AG04449 (cell line): ENCODE measurements at regions of chr14 and their contacts with region 1.

Region 1: GRCh38 chr14:30270200-30271161 is 288.5 kb upstream of the G2E3 start:
- DNase-seq: no peak
- H3K4me3 ChIP-seq: peak overlapping the region; percentile 47
- CTCF ChIP-seq: peak; percentile 91

Region 2: DNA sequence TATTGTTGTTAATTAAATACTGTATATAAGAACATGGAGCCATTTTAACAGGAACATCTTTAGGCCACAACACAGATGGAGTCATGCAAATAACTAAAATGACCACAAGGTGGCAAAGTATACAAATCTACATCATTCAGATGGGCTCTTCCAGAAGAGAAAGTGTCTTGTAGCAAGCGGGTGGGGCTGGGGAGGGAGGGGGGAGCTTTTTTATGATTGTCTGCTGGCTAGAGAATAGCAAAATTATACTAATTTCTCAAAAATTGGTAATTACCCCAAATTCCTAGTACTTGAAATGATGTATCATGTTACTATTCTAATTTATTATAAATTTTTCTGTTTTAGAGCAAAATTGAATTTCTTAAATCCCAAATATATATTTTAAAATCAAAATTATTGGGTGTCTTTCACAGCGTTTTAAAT is 721.5 kb before region 1 on chr14:
- CTCF ChIA-PET with region 1: interaction called, 26 read pairs
- POLR2A ChIA-PET with region 1: no interaction called
- DNase-seq: peak; percentile 17
- H3K4me3 ChIP-seq: no peak overlapping the region
- CTCF ChIP-seq: peak; percentile 23

Region 3: DNA sequence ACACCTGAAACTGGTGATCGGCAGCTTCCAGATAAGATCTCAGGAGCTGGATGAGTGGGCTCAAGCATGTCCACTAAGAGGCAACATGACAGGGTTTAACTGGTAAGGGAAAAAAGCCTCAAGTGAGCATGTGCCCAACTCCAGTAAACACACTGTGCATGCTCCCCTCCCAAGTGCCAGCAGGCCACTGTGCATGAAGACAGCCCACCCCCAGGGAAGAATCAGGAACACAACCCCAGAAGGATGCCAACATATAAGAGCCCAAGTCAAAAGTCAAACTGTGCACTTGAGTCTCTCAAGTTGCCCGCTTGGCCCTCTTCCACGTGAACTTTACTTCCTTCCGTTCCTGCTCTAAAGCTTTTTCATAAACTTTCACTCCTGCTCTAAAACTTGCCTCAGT is 31.5 kb before region 1 on chr14:
- CTCF ChIA-PET with region 1: interaction called, 11 read pairs
- POLR2A ChIA-PET with region 1: no interaction called
- DNase-seq: no peak
- H3K4me3 ChIP-seq: no peak overlapping the region
- CTCF ChIP-seq: no peak

Region 4: DNA sequence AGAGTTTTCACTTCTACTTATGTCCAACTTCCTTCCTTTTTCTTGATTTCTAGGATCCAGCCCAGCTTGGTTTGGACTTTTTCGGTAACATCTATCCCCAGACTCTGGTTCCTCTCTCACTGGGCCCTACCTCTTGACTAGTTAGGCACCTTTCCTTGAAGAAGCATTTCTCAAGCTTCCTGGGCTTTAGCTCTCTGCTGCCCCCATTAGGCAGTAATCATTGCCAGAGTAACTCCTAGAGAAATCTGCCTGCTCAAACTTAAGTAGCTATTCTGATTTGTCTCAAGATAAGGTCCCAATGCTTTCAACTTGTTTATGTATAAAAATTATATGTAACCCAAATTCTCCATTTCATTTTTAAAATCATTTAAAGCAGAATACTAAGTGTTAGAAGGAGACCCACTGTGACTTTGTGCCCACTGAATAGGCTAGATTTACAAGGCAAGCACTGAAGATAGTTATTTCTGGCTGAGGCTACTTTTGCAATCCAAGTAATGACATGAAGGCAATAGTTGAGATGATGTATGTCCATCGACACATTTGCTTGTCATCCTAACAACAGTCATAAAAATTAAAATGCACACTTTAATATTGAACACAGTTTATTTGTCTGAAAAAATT is 13.5 kb after region 1 on chr14:
- CTCF ChIA-PET with region 1: interaction called, 169 read pairs
- POLR2A ChIA-PET with region 1: no interaction called
- DNase-seq: no peak
- H3K4me3 ChIP-seq: no peak overlapping the region
- CTCF ChIP-seq: peak; percentile 63